Ascending aorta (tissue), 2 donors: ENCODE measurements at regions of chr11 and their contacts with region 1.

Region 1: GRCh38 chr11:68121067-68121899 is at the start of gene CHKA:
- DNase-seq: peak; percentile 64 to 95
- H3K4me3 ChIP-seq: peak within 1 kb of the TSS; percentile 82 to 83
- H3K27ac ChIP-seq: peak within 1 kb of the TSS; percentile 97 to 99
- H3K4me1 ChIP-seq: peaks cover 0 to 2% of the 10 kb centered on the region in 2 donors
- H3K27me3 ChIP-seq: no peaks in the 10 kb centered on the region
- CTCF ChIP-seq: peak in 1 of 3 experiments; percentile 29
- total RNA-seq, gene CHKA: 10.1 TPM

Region 2: DNA sequence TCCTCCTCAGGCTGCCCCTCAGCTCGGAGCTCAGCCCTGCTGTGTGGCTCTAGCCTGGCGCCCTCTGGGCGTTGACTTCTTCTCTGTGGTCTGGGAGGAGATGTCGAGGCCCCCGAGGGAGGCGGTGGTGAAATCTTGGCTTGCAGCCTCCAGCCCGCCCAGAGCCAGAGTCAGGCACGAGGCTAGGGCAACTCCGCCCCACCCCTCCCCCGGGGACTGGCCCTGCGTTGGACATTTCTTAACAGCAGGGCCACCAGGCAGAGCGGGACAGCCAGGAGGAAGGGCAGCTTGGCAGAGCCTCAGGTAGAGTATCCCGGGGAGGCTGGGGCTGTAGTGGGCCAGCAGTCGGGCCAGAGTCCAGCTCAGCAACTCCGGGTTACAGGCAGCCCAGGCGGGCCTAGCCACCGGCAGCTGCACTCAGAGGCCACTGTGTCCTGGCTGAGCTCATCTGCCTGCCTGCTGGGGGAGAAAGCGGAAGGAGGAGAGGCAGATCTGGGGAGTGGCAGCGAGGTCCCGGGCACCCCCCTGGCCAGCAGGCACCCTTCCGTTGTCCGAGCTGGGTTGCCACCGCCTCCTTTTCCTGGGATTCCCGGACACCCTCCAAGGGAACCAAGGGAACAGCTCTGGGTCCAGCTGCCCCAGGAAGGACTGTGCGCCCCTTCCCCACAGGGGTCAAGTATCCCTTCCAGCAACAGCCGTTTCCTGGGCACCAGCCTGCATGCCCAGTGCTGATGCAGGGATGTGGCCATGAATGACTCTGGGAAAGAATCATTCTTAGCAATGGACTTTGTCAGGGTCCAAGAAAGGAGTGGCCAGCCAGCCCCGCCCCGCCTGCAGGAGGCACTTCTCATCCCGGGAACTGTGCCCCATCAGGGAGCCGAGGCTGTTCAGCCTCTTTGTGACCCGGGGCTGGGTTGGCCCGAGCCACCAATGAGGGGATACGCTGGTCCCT is 110.9 kb before region 1 on chr11 and contains the start of gene ALDH3B1:
- intact Hi-C with region 1: loop called (anchors 2 kb)
- DNase-seq: peak; percentile 74 to 97
- H3K4me3 ChIP-seq: peak within 1 kb of the TSS; percentile 35 to 60
- H3K27ac ChIP-seq: peak within 1 kb of the TSS; percentile 82 to 91
- H3K4me1 ChIP-seq: peaks cover 9 to 32% of the 10 kb centered on the region in 2 donors
- H3K27me3 ChIP-seq: no peaks in the 10 kb centered on the region
- CTCF ChIP-seq: no peak
- total RNA-seq, gene ALDH3B1: 42.8 TPM

Region 3: GRCh38 chr11:68030318-68031138 is 90.8 kb before region 1 on chr11 and contains the start of gene NDUFS8:
- intact Hi-C with region 1: loop called (anchors 1 kb)
- DNase-seq: peak; percentile 95 to 99
- H3K4me3 ChIP-seq: peak within 1 kb of the TSS; percentile 75 to 96
- H3K27ac ChIP-seq: peak within 1 kb of the TSS; percentile 73 to 77
- H3K4me1 ChIP-seq: peaks cover 9 to 17% of the 10 kb centered on the region in 2 donors
- H3K27me3 ChIP-seq: no peaks in the 10 kb centered on the region
- CTCF ChIP-seq: no peak
- total RNA-seq, gene NDUFS8: 316 TPM

Region 4: GRCh38 chr11:68038718-68039525 is 82.4 kb before region 1 on chr11 and contains the start of gene TCIRG1:
- intact Hi-C with region 1: loop called (anchors 2 kb)
- DNase-seq: peak; percentile 73 to 96
- H3K4me3 ChIP-seq: peak within 1 kb of the TSS; percentile 63 to 78
- H3K27ac ChIP-seq: peak within 1 kb of the TSS; percentile 90 to 91
- H3K4me1 ChIP-seq: peaks cover 14 to 30% of the 10 kb centered on the region in 2 donors
- H3K27me3 ChIP-seq: no peaks in the 10 kb centered on the region
- CTCF ChIP-seq: peak in 2 of 3 experiments; percentile 8 to 79
- total RNA-seq, gene TCIRG1: 385 TPM

Region 5: DNA sequence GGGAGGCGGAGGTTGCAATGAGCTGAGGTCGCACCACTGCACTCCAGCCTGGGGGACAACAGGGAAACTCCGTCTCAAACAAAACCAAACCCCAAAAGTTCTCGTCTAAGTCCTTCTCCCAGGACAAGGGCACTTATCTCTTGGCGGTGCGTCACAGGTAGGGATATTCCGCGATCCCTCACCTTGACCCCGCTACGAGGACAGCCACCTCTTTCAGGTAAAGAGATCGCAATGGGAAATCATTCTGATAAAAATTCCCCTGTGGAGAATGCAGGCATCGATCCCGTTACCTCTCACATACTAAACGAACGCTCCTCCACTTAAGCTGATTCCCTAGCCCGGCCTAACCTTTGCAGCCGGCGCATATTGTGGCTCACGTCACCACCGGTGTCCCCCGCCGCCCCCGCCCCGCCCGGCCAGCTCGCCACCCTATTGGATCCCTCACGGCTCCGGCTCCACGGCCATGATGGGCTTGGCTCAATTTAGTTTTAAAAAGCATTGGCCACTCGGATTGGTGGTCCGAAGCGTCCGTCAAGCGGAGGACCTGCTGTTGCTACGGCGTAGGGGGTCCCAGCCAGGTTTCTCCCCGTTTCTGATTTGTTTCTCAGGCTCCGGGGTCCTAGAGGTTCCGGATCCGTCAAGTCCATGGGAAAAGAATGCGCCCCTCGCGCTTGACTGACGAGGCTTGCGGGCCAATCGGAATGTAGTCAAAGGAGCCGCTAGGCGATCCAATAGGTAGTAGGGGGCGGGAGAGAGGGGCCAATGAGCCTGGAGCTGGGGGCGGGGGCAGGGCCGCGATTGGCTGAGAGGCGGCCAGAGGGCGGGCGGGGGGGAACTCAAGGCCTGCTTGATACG is 338.8 kb after region 1 on chr11:
- intact Hi-C with region 1: loop called (anchors 2 kb)
- DNase-seq: peak; percentile 96 to 99
- H3K4me3 ChIP-seq: peak overlapping the region; percentile 71 to 74
- H3K27ac ChIP-seq: peak overlapping the region; percentile 92
- H3K4me1 ChIP-seq: peaks cover 6 to 25% of the 10 kb centered on the region in 2 donors
- H3K27me3 ChIP-seq: no peaks in the 10 kb centered on the region
- CTCF ChIP-seq: peak in 1 of 3 experiments; percentile 12